Dorsolateral prefrontal cortex (tissue), 120 donors: ENCODE measurements at regions of chr3 and their contacts with region 1.

Region 1: DNA sequence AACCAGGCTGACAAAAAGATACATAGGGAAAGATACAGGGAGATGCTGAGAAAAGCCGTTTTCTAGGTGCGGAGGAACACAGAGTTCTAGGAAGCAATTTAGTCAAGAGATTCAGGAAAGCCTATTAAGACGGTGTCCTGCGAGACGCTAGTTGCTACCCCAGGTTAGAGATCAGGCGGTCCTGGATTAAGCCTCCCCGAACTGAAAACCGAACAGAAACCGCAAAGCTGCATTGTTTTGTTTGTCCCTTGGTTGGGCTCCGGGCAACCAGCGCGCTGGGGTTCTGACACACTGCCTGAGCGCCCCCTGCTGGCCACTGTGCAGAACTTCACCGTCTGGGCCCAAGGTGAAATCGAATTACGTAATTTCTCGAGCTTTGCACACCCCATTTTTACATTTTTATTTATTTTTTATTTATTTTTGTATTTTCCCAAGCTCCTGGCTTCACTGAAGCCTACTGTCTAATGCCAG is 37.3 kb upstream of the NDUFB4 start:
- DNase-seq: peak; percentile 75 to 92 (median 84)
- H3K4me3 ChIP-seq: peak overlapping the region in 58 of 59 donors; percentile 28 to 79 (median 62)
- H3K27ac ChIP-seq: peak overlapping the region in 58 of 59 donors; percentile 68 to 99 (median 91)
- H3K27me3 ChIP-seq: no peaks in the 10 kb centered on the region
- CTCF ChIP-seq: peak; percentile 93 to 100 (median 99)

Region 2: DNA sequence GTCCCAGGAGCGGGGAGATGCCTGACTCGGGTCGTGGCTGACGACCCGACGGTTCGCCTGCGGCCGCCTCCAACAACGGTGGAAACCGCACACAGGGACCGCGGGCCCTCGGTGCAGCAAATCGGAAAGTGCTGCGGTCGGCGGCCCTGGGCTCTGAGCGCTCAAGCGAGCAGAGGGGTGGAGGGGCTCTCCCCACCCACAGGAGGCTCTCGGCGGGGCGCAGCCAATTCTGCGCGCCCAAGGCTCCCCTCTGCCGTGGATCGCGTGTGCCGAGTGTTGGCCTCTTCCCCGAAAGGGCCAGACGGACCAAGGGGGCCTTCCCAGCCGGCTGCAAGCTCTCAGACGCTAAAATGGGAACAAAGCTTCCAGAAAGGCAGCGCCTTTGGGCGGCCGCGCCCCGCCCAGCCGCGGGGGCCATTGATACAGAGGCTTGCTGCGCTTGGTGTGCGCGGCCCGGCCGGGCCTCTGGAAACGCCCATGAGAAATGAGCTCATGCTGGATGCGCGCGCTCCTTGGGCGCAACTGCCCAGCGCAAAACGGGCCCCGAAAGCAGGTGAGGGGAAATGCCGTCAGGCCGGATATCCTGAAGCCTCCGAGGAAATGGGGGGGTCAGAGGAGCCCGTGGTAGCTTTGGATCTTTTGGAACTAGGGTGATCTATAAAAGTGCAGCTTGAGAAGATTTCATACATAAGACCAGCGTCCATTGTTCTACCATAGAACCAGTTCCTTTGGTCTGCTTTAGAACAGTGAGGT is 463.4 kb before region 1 on chr3:
- intact Hi-C with region 1: loop called in 1 of 2 experiments (anchors 10 kb)
- DNase-seq: peak; percentile 60 to 90 (median 81)
- H3K4me3 ChIP-seq: peak overlapping the region; percentile 61 to 99 (median 90)
- H3K27ac ChIP-seq: peak overlapping the region; percentile 81 to 100 (median 99)
- H3K27me3 ChIP-seq: no peaks in the 10 kb centered on the region
- CTCF ChIP-seq: peak in 6 of 56 donors; percentile 7 to 32 (median 14)

Region 3: DNA sequence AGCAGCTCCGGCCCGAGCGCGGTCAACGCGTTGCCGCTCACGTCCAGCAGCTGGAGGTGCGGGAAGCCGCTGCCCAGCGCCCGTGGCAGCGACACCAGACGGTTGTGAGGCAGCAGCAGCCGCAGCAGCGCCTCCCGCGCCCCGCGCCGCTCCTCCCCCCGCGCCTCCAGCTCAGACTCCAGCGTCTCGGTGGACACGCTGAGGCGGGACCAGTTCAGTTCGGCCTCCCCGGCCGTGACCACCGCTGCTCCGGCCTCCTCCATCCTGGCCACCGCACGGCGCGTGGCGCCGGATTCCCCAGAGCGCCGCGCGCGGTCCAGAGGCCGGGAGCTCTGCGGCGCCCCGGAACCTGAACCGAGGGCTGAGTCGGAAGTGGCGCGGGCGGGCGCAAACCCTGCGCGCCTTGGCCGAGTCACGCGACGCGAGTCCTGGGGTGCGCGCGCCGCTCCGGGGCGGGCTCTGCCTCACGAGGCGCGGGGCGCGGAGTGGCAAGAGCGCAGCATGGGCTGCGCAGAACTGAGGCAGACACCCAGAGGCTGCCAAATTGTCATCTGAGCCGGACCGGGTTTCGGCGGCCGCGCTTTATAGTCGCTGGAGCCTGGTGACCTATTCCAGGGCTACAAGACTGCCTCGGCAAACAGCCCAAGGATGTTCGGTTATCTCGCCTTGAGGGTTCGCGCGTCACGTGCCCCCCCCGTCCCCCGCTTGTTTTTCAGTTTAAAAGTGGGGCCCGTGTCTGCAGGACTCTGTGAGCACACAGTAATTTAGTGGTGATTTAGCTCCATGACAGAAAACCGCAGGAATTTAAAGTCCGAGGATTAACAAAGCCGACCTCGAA is 209.6 kb before region 1 on chr3 and contains the start of gene LRRC58:
- intact Hi-C with region 1: loop called in 1 of 2 experiments (anchors 10 kb)
- DNase-seq: peak; percentile 71 to 89 (median 82)
- H3K4me3 ChIP-seq: peak within 1 kb of the TSS; percentile 64 to 99 (median 90)
- H3K27ac ChIP-seq: peak within 1 kb of the TSS; percentile 65 to 99 (median 96)
- H3K27me3 ChIP-seq: no peaks in the 10 kb centered on the region
- CTCF ChIP-seq: peak in 51 of 56 donors; percentile 4 to 70 (median 46)
- total RNA-seq, gene LRRC58: 15.6 to 29.6 (median 20.9) TPM

Region 4: GRCh38 chr3:120569222-120570060 is 10.6 kb after region 1 on chr3:
- intact Hi-C with region 1: no loop called
- DNase-seq: no peak
- H3K4me3 ChIP-seq: no peak overlapping the region
- H3K27ac ChIP-seq: peak overlapping the region in 57 of 59 donors; percentile 28 to 92 (median 82)
- H3K27me3 ChIP-seq: no peaks in the 10 kb centered on the region
- CTCF ChIP-seq: no peak

Region 5: GRCh38 chr3:120614765-120615164 is 56.0 kb after region 1 on chr3:
- intact Hi-C with region 1: no loop called
- DNase-seq: no peak
- H3K4me3 ChIP-seq: no peak overlapping the region
- H3K27ac ChIP-seq: no peak overlapping the region
- H3K27me3 ChIP-seq: no peaks in the 10 kb centered on the region
- CTCF ChIP-seq: no peak

Region 6: DNA sequence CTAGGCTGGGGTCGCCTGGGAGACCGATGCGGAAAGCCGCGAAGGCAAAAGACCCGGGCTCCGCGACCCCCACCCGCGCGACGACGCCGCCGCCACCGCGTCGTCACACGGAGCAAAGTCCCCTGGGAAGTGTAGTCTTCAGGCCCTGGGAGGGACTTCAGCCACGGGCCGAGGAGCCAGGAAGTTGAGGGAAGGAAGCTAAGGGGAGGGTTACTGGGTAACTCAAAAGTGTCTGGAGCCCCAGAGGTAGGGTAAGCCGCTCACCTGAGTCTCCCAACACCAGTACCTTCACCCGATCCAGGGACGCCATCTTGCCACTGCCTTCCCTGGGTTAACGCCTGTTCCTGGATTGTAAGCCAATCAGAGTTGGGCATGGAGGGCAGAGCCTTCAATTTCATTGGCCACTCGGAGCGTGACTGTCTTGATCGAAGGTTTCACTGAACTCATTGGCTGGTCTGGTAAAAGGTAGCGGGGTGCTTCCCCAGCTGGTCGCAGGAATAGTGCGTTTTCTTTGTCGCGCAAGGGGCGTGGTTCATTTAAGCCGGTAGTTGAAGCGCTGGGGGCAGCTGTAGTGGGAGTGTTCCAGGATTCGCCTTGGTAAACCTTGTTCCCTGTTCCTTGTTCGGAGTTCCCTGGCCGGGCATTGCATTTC is 183.5 kb after region 1 on chr3 and contains the starts of genes GTF2E1 and RABL3:
- intact Hi-C with region 1: loop called (anchors 2 to 10 kb)
- DNase-seq: peak; percentile 96 to 100 (median 99)
- H3K4me3 ChIP-seq: peak within 1 kb of the TSS; percentile 70 to 99 (median 91)
- H3K27ac ChIP-seq: peak within 1 kb of the TSS; percentile 82 to 100 (median 97)
- H3K27me3 ChIP-seq: no peaks in the 10 kb centered on the region
- CTCF ChIP-seq: peak in 16 of 56 donors; percentile 4 to 41 (median 18)
- total RNA-seq, gene GTF2E1: 6.9 to 20.8 (median 13.6) TPM
- total RNA-seq, gene RABL3: 14.9 to 33.8 (median 25.1) TPM

Region 7: GRCh38 chr3:120908030-120908794 is 349.4 kb after region 1 on chr3 and contains the start of gene STXBP5L:
- intact Hi-C with region 1: loop called in 1 of 2 experiments (anchors 10 kb)
- DNase-seq: peak; percentile 58 to 97 (median 88)
- H3K4me3 ChIP-seq: peak within 1 kb of the TSS; percentile 40 to 79 (median 66)
- H3K27ac ChIP-seq: peak within 1 kb of the TSS in 54 of 59 donors; percentile 6 to 88 (median 70)
- H3K27me3 ChIP-seq: peaks cover 0 to 34% (median 6%) of the 10 kb centered on the region in 45 donors
- CTCF ChIP-seq: no peak
- total RNA-seq, gene STXBP5L: 39.1 to 189 (median 129) TPM